Activated CD8-positive, alpha-beta T cell treated with anti-CD3 and anti-CD28 coated beads, Interleukin-2, amount 10 ng/mL, durations not matched to agents 7 days and 5 days (primary cell): ENCODE measurements at regions of chr12 and their contacts with region 1.

Region 1: GRCh38 chr12:10749700-10750384 is 26.7 kb upstream of the YBX3 start:
- DNase-seq: peak; percentile 85
- ATAC-seq: peak; percentile 96
- H3K4me3 Mint-ChIP-seq: peak overlapping the region; percentile 70
- H3K27ac Mint-ChIP-seq: no peak overlapping the region
- H3K4me1 Mint-ChIP-seq: peaks cover 14% of the 10 kb centered on the region
- H3K27me3 Mint-ChIP-seq: peaks cover 34% of the 10 kb centered on the region

Region 2: DNA sequence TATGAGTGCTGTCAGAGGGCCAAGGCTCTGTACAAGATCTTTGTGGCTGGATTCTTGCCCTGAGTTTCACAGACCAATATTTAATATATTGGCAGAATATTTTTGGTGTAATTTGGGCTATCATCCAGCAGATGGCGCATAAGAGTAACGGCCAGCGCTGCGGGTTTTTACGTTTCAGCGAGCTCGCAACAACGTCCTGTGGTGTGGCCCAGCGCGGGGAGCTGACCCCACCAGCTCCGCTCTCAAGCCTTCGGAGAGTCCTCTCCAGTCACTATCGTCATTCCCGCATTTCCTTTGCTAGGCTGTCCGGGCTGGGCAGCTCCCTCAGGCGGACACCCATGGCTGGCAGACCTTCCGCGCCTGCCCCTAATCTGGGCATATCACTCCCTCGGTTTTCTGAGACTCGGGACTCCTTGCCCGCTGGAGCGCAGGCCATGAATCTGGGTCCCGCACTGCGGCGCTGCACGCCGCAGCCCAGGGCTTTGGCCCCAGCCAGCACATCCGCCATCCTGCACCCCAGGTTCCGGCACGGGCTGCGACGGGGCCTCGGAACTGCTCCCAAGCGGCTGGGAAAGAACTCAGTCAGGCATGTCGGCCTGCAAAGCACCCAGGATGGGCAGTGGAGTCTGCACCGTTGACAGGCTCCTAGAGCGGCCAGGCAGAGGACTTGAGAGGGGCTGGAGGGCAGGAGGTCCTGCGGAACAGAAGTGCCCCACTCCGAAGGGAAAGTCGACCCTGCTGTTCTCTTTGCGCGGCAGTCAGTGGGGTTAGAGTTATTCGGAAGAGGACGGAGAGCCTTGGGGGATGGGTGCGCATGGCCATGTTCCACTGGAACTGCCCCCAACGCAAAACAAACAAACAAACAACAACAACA is 596.3 kb before region 1 on chr12:
- CTCF ChIA-PET with region 1: interaction called, 15 read pairs
- POLR2A ChIA-PET with region 1: no interaction called
- DNase-seq: peak; percentile 73
- ATAC-seq: peak; percentile 83
- H3K4me3 Mint-ChIP-seq: peak overlapping the region; percentile 88
- H3K27ac Mint-ChIP-seq: peak overlapping the region; percentile 75
- H3K4me1 Mint-ChIP-seq: peaks cover 12% of the 10 kb centered on the region
- H3K27me3 Mint-ChIP-seq: peaks cover 12% of the 10 kb centered on the region

Region 3: GRCh38 chr12:10613349-10614055 is 136.3 kb before region 1 on chr12 and contains the start of gene MAGOHB:
- CTCF ChIA-PET with region 1: interaction called, 15 read pairs
- POLR2A ChIA-PET with region 1: no interaction called
- DNase-seq: peak; percentile 99
- ATAC-seq: peak; percentile 97
- H3K4me3 Mint-ChIP-seq: peak within 1 kb of the TSS; percentile 99
- H3K27ac Mint-ChIP-seq: peak within 1 kb of the TSS; percentile 100
- H3K4me1 Mint-ChIP-seq: peaks cover 39% of the 10 kb centered on the region
- H3K27me3 Mint-ChIP-seq: no peaks in the 10 kb centered on the region
- total RNA-seq, gene MAGOHB: 73.9 to 76.9 TPM

Region 4: DNA sequence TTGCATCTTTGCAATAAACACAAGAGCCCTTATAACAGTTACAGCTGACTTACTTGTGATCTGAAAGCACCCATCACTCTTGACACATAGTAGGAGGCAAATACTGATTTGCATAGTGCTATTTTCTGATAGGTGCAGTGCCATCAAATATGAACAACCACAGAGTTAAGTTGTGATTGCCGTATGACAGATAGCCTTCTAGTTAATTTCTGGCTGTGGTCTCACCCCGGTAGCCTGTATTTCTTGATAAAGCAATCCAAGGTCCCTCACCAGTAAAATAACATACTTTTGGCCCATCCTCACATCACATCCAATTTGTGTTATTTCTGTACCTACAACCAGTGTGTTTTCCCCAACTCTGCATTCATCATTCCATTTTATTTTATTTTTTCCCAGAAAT is 52.7 kb before region 1 on chr12:
- CTCF ChIA-PET with region 1: interaction called, 13 read pairs
- POLR2A ChIA-PET with region 1: no interaction called
- DNase-seq: no peak
- ATAC-seq: no peak
- H3K4me3 Mint-ChIP-seq: no peak overlapping the region
- H3K27ac Mint-ChIP-seq: no peak overlapping the region
- H3K4me1 Mint-ChIP-seq: peaks cover 20% of the 10 kb centered on the region
- H3K27me3 Mint-ChIP-seq: no peaks in the 10 kb centered on the region

Region 5: DNA sequence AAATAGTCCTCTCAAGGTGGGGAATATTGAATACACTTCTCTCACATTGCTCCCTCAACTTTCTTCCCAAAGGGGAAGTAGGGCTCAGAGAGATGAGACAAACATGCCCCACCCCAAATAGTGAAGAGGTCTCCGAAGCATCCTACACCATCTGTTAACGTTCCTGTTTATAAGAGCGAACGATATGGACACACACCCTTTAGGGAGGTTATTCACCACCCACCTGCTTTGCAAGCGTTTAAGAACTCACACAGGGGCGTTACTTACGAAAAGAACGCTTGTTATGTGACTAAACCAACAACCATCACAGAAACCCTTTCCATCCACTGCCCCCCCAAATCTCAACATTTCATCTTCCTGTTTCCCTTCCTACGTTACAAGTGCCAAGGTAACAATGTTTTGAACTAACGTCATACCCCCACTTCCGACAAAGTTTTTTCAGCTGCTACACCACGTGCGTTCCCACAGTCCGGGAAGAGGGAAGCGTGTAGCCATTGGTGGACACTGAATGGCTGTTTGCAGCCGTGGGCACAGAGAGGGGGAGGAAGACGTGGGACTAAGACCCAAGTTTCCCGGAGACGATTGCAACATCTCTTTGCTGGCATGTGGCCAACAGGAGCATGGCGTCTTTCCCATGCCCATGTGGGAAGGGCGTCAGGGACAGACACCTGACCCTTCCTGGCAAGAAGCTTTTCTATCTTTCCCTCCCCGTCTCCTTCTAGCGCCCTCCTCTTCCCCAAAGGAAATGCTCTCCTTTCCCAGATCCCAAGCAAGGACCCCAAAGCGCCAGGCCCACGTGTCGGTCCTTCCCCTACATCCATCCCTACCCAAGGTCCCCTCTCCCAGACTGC is 28.0 kb before region 1 on chr12:
- CTCF ChIA-PET with region 1: interaction called, 22 read pairs
- POLR2A ChIA-PET with region 1: no interaction called
- DNase-seq: peak; percentile 76
- ATAC-seq: peak; percentile 64
- H3K4me3 Mint-ChIP-seq: peak overlapping the region; percentile 99
- H3K27ac Mint-ChIP-seq: peak overlapping the region; percentile 96
- H3K4me1 Mint-ChIP-seq: peaks cover 48% of the 10 kb centered on the region
- H3K27me3 Mint-ChIP-seq: peaks cover 28% of the 10 kb centered on the region

Region 6: GRCh38 chr12:10779103-10779502 is 29.3 kb after region 1 on chr12:
- CTCF ChIA-PET with region 1: no interaction called
- POLR2A ChIA-PET with region 1: no interaction called
- DNase-seq: no peak
- ATAC-seq: no peak
- H3K4me3 Mint-ChIP-seq: no peak overlapping the region
- H3K27ac Mint-ChIP-seq: no peak overlapping the region
- H3K4me1 Mint-ChIP-seq: no peaks in the 10 kb centered on the region
- H3K27me3 Mint-ChIP-seq: peaks cover 17% of the 10 kb centered on the region